ENCODE measurements at regions of chr14 and their contacts with region 1.

Region 1: GRCh38 chr14:57085808-57086207 is 182.9 kb downstream of the EXOC5 start:
- DNase-seq: no peak

Region 2: DNA sequence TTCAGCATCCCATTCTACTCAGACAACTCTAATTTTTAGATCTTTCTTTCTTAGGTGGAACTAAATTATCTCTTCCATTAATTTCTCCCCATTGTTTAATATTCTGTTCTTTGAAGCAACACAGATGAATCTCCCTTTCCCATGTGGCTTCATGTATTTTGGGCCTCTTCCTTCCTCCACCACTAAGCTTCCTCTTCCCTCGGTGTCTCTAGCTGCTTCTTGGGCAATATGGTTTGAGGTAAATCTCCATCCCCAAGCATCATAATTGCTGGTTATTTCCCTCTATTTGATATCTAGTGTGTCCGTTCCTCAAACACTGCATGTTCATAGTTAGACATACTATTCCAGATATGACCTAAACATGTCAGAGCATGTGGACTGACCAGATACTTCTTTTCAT is 848.4 kb before region 1 on chr14:
- intact Hi-C with region 1: loop called in 1 of 2 experiments (anchors 5 kb)
- DNase-seq: no peak

Region 3: DNA sequence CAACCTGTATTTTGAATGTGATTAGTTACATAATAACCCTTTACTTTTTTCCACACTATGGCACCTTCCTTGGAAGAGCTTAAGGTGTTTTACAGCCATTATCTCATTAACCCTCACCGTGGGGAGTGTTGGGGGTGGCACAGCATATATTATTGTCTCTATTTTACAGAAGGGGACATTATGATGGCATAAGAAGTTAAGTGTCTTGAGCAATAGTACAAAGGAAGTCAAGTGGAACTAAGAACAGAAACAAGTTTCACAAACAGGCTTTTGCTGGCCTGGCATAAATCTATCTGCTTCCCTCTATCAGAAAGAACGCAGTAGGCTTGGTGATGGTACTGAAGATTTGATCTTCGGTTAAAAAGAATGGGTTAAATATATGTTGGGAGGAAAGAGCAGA is 105.9 kb before region 1 on chr14:
- intact Hi-C with region 1: no loop called
- DNase-seq: no peak

Measured in posterior vena cava (tissue), 2 donors.